Mucosa of descending colon (tissue), 3 donors: ENCODE measurements at regions of chr3 and their contacts with region 1.

Region 1: GRCh38 chr3:196837819-196838420 is 29.8 kb upstream of the SENP5 start:
- DNase-seq: peak in 2 of 3 donors; percentile 69 to 85
- ATAC-seq: peak; percentile 93
- H3K4me3 ChIP-seq: no peak overlapping the region
- H3K4me1 ChIP-seq: no peaks in the 10 kb centered on the region
- CTCF ChIP-seq: peak; percentile 76

Region 2: DNA sequence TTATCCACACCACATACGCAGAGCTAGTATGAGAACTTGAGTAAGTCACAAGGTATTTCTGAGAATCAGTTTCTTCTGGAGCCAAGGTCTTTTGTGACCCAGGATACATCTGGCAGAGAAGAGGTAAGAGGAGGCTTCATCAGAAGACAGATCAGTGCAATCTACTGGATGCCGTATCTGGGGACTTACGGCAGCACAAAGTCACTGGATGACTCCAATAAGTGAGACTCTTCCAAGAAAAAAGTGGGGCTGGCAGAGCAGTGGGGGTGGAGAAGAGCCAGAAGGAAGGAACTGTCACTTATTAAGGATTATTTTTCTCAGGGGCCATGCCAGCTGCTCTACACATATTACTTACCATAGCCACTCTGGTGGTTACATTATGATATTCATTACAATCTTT is 374.1 kb before region 1 on chr3:
- intact Hi-C with region 1: no loop called
- DNase-seq: no peak
- ATAC-seq: no peak
- H3K4me3 ChIP-seq: no peak overlapping the region
- H3K4me1 ChIP-seq: no peaks in the 10 kb centered on the region
- CTCF ChIP-seq: no peak

Region 3: GRCh38 chr3:196969660-196970546 is 132.0 kb after region 1 on chr3:
- intact Hi-C with region 1: loop called in 1 of 2 experiments (anchors 10 kb)
- DNase-seq: peak; percentile 68 to 84 (median 73)
- ATAC-seq: peak; percentile 88
- H3K4me3 ChIP-seq: peak overlapping the region; percentile 68
- H3K4me1 ChIP-seq: peaks cover 8% of the 10 kb centered on the region
- CTCF ChIP-seq: peak; percentile 90